HCT116 (cell line): ENCODE measurements at regions of chr3 and their contacts with region 1.

Region 1: DNA sequence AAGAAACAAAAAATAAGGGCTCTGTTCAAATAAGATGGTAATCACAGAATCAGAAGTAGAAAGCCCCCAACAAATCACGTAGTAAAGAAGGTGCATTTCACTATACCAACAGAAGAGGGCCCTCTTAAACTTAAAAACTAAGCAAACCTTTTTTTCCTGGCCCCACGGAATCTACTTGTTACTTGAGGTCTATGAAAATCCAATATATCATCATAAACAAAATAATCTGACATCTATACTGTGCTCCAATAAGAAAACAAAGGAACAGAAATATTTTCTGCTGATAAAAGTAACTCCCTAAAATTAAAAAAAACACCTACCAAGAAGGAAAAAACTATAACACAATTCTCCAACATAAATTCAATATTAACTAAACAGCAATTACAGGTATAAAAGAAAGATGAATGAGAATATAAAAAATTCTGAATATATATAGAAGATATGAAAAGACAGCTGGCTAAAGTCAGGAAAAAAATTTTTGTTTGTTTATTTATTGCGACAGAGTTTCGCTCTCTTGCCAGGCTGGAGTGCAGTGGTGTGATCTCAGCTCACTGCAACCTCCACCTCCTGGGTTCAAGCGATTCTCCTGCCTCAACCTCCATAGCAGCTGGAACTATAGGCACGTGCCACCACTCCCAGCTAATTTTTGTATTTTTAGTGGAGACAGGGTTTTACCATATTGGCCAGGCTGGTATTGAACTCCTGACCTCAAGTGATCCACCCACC is 81.8 kb downstream of the CLASP2 start:
- DNase-seq: peak; percentile 44
- ATAC-seq: peak; percentile 61
- H3K4me3 ChIP-seq: no peak overlapping the region
- H3K27ac ChIP-seq: no peak overlapping the region
- H3K4me1 ChIP-seq: no peaks in the 10 kb centered on the region
- H3K27me3 ChIP-seq: no peaks in the 10 kb centered on the region
- CTCF ChIP-seq: peak; percentile 49 to 71 (median 50); a peak in 5 of 6 replicates
- POLR2A ChIP-seq: no peak
- RAD21 ChIP-seq: peak; percentile 76

Region 2: GRCh38 chr3:33318709-33319380 is 317.4 kb before region 1 on chr3:
- CTCF ChIA-PET with region 1: no interaction called
- POLR2A ChIA-PET with region 1: no interaction called
- RAD21 ChIA-PET with region 1: no interaction called
- intact Hi-C with region 1: no loop called
- DNase-seq: no peak
- ATAC-seq: no peak
- H3K4me3 ChIP-seq: no peak overlapping the region
- H3K27ac ChIP-seq: no peak overlapping the region
- H3K4me1 ChIP-seq: peaks cover 11 to 26% of the 10 kb centered on the region in 2 experiments
- H3K27me3 ChIP-seq: no peaks in the 10 kb centered on the region
- CTCF ChIP-seq: peak in 2 of 3 experiments; percentile 4 to 23; a peak in 2 of 6 replicates
- POLR2A ChIP-seq: no peak
- RAD21 ChIP-seq: peak; percentile 43

Region 3: DNA sequence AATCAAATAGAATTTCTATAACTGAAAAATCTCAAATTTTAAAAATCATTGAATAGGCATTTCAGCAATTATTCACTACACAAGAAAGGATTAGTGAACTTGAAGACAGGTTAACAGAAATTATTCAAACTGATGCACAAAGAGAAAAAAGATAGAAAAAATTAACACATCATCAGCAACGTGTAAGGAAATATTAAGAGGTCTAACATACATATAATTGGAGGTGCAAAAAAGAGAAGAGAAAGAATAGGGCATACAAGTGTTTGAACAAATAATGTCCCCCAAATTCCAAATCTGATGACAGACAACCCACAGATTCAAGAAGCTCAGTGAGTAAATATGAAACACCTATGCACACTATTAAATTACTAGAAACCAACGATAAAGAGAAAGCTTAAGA is 301.9 kb before region 1 on chr3:
- CTCF ChIA-PET with region 1: no interaction called
- POLR2A ChIA-PET with region 1: no interaction called
- RAD21 ChIA-PET with region 1: no interaction called
- intact Hi-C with region 1: no loop called
- DNase-seq: no peak
- ATAC-seq: no peak
- H3K4me3 ChIP-seq: no peak overlapping the region
- H3K27ac ChIP-seq: no peak overlapping the region
- H3K4me1 ChIP-seq: no peaks in the 10 kb centered on the region
- H3K27me3 ChIP-seq: no peaks in the 10 kb centered on the region
- CTCF ChIP-seq: no peak
- POLR2A ChIP-seq: no peak
- RAD21 ChIP-seq: no peak

Region 4: DNA sequence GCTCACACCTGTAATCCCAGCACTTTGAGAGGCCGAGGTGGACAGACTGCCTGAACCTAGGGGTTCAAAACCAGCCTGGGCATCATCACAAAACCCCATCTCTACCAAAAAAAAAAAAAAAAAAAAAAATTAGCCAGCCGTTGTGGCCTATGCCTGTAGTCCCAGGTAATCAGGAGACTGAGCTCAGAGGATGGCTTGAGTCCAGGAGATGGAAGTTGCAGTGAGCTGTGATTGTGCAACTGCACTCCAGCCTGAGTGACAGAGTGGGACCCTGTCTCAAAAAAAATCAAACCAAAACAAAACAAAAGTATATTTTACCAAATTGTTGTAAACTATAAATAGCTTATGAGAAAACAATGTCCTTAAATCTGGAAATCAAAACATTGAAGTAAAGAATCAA is 161.4 kb before region 1 on chr3:
- CTCF ChIA-PET with region 1: no interaction called
- POLR2A ChIA-PET with region 1: no interaction called
- RAD21 ChIA-PET with region 1: no interaction called
- intact Hi-C with region 1: no loop called
- DNase-seq: no peak
- ATAC-seq: no peak
- H3K4me3 ChIP-seq: no peak overlapping the region
- H3K27ac ChIP-seq: no peak overlapping the region
- H3K4me1 ChIP-seq: no peaks in the 10 kb centered on the region
- H3K27me3 ChIP-seq: no peaks in the 10 kb centered on the region
- CTCF ChIP-seq: no peak
- POLR2A ChIP-seq: no peak
- RAD21 ChIP-seq: no peak

Region 5: DNA sequence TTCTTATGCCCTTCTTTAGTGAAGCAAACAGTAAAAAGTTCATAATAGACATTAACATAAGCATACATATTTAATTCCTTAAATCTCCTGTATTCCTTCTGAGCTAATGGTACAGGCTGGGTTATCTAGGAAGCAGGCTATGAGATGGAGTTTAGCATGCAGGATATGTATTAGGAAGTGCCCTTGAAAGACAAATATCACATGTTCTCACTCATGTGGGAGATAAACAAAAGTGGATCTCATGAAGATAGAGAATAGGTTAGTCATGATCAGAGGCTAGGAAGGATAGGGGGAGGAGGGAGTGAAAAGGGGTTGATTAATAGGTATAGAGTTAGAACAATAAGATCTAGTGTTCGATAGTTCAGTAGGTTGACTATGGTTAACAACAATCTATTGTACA is 23.7 kb before region 1 on chr3:
- CTCF ChIA-PET with region 1: no interaction called
- POLR2A ChIA-PET with region 1: no interaction called
- RAD21 ChIA-PET with region 1: no interaction called
- intact Hi-C with region 1: loop called (anchors 1 kb)
- DNase-seq: no peak
- ATAC-seq: no peak
- H3K4me3 ChIP-seq: no peak overlapping the region
- H3K27ac ChIP-seq: no peak overlapping the region
- H3K4me1 ChIP-seq: no peaks in the 10 kb centered on the region
- H3K27me3 ChIP-seq: no peaks in the 10 kb centered on the region
- CTCF ChIP-seq: no peak
- POLR2A ChIP-seq: no peak
- RAD21 ChIP-seq: no peak